Aorta (tissue), 5 donors: ENCODE measurements at regions of chr10 and their contacts with region 1.

Region 1: GRCh38 chr10:89563861-89564478 is 28.6 kb upstream of the SLC16A12 start:
- DNase-seq: no peak
- ATAC-seq: no peak
- H3K4me3 ChIP-seq: no peak overlapping the region
- H3K27ac ChIP-seq: no peak overlapping the region
- H3K4me1 ChIP-seq: no peaks in the 10 kb centered on the region
- H3K27me3 ChIP-seq: no peaks in the 10 kb centered on the region

Region 2: GRCh38 chr10:88254091-88254490 is 1309.9 kb before region 1 on chr10:
- intact Hi-C with region 1: no loop called
- DNase-seq: peak in 1 of 2 donors; percentile 52
- ATAC-seq: no peak
- H3K4me3 ChIP-seq: no peak overlapping the region
- H3K27ac ChIP-seq: no peak overlapping the region
- H3K4me1 ChIP-seq: no peaks in the 10 kb centered on the region
- H3K27me3 ChIP-seq: no peaks in the 10 kb centered on the region

Region 3: GRCh38 chr10:89251409-89252224 is 312.4 kb before region 1 on chr10 and contains the start of gene LIPA:
- intact Hi-C with region 1: loop called in 1 of 2 experiments (anchors 10 kb)
- DNase-seq: peak; percentile 98
- ATAC-seq: peak; percentile 99
- H3K4me3 ChIP-seq: peak within 1 kb of the TSS; percentile 62 to 74
- H3K27ac ChIP-seq: peak within 1 kb of the TSS in 1 of 2 donors; percentile 71
- H3K4me1 ChIP-seq: no peaks in the 10 kb centered on the region
- H3K27me3 ChIP-seq: no peaks in the 10 kb centered on the region
- total RNA-seq, gene LIPA: 55.5 to 83.3 TPM

Region 4: GRCh38 chr10:89426230-89426868 is 137.6 kb before region 1 on chr10:
- intact Hi-C with region 1: loop called (anchors 1 to 2 kb)
- DNase-seq: no peak
- ATAC-seq: peak; percentile 81
- H3K4me3 ChIP-seq: no peak overlapping the region
- H3K27ac ChIP-seq: no peak overlapping the region
- H3K4me1 ChIP-seq: no peaks in the 10 kb centered on the region
- H3K27me3 ChIP-seq: no peaks in the 10 kb centered on the region

Region 5: GRCh38 chr10:89522466-89522865 is 41.5 kb before region 1 on chr10:
- intact Hi-C with region 1: loop called in 1 of 2 experiments (anchors 5 kb)
- DNase-seq: no peak
- ATAC-seq: no peak
- H3K4me3 ChIP-seq: no peak overlapping the region
- H3K27ac ChIP-seq: no peak overlapping the region
- H3K4me1 ChIP-seq: peaks cover 0 to 2% of the 10 kb centered on the region in 2 donors
- H3K27me3 ChIP-seq: no peaks in the 10 kb centered on the region